ENCODE measurements at regions of chr5 and their contacts with region 1.

Region 1: GRCh38 chr5:16564248-16564867 is 52.4 kb downstream of the RETREG1 start:
- DNase-seq: no peak
- H3K4me3 ChIP-seq: no peak overlapping the region
- H3K27ac ChIP-seq: no peak overlapping the region
- H3K4me1 ChIP-seq: no peaks in the 10 kb centered on the region
- H3K27me3 ChIP-seq: no peaks in the 10 kb centered on the region
- CTCF ChIP-seq: no peak
- EP300 ChIP-seq: no peak
- POLR2A ChIP-seq: no peak

Region 2: GRCh38 chr5:16378762-16379161 is 185.6 kb before region 1 on chr5:
- in situ Hi-C with region 1: no loop called
- intact Hi-C with region 1: no loop called
- DNase-seq: no peak
- H3K4me3 ChIP-seq: no peak overlapping the region
- H3K27ac ChIP-seq: no peak overlapping the region
- H3K4me1 ChIP-seq: no peaks in the 10 kb centered on the region
- H3K27me3 ChIP-seq: no peaks in the 10 kb centered on the region
- CTCF ChIP-seq: no peak
- EP300 ChIP-seq: no peak
- POLR2A ChIP-seq: no peak

Region 3: GRCh38 chr5:16528382-16529110 is 35.8 kb before region 1 on chr5:
- in situ Hi-C with region 1: no loop called
- intact Hi-C with region 1: loop called (anchors 1 kb)
- DNase-seq: no peak
- H3K4me3 ChIP-seq: no peak overlapping the region
- H3K27ac ChIP-seq: peak overlapping the region in 3 of 4 donors; percentile 4 to 68 (median 6)
- H3K4me1 ChIP-seq: peaks cover 6 to 34% (median 21%) of the 10 kb centered on the region in 4 donors
- H3K27me3 ChIP-seq: no peaks in the 10 kb centered on the region
- CTCF ChIP-seq: no peak
- EP300 ChIP-seq: no peak
- POLR2A ChIP-seq: peak; percentile 17

Measured in transverse colon (tissue), 4 donors.